ENCODE measurements at regions of chr19 and their contacts with region 1.

Region 1: DNA sequence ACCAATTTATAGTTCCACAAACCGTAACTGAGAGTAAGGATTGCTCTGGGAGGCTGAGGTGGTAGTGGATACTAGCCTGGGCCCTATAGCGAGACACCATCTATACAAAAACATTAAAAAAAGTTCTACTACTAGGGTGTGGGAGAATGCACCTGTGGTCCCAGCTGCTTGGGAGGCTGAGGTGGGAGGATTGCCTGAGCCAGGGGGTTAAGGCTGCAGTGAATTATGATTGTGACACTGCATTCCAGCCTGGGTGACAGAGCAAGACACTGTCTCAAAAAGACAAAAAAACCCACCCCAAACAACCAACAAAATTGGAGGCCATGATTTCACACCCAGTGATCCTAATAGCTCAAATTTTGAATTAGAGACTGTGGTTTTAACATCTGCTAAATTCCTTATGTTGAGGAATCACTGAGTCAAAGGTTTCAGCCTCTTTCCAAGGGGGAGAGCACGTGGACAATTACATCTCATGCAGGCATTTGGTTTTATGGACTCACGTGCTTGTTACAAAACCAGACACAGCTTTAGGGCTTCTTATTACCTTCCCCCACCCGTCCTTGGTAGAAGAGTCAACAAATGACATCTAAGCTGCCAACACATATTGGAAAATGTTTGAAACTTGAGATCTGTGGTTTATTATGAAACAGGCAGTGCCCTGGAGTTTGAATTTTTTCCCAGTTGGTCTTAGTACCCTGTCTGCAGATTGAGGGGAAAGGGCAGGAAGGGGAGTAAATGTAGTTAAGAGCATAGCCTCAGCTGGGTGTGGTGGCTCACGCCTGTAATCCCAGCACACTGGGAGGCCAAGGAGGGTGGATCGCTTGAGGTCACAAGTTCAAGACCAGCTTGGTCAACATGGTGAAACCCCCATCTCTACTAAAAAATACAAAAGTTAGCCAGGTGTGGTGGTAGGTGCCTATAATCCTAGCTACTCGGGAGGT is 18.5 kb downstream of the CYP2A6 start:
- H3K4me3 ChIP-seq: no peak overlapping the region
- H3K27ac ChIP-seq: peak overlapping the region; percentile 84
- H3K4me1 ChIP-seq: peaks cover 26% of the 10 kb centered on the region
- CTCF ChIP-seq: no peak

Region 2: DNA sequence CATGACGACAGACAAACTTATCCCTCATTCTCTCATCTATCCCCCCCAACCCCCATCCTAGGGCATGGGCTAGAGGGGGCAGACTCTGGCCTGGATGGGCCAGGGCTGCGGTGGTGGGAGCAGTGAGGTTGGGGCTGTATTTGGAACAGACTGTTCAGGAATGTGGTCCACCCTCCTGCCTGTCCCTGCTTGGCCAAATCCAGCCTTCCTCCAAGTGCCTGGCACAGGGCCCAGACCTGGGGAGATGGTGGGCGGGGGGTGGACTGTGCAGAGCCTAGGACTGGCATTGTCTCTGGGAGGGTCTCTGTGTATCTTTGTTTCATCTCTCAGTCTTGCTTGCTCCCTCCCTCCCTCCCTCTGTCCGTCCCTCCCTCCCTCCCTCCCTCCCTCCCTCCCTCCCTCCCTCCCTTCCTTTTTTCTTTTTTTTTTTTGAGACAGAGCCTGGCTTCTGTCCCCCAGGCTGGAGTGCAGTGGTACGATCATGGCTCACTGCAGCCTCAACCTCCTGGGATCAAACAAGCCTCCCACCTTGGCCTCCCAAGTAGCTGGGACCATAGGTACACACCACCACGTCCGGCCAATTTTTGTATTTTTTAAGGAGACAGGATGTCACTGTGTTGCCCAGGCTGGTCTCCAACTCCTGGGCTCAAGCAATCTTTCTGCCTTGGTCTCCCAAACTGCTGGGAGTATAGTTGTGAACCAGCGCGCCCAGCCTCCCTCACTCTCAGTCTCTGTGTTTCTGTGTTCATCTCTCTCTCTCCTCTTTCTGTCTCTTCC is 18.4 kb before region 1 on chr19:
- CTCF ChIA-PET with region 1: interaction called, 25 read pairs
- POLR2A ChIA-PET with region 1: interaction called, 4 read pairs
- H3K4me3 ChIP-seq: no peak overlapping the region
- H3K27ac ChIP-seq: no peak overlapping the region
- H3K4me1 ChIP-seq: peaks cover 10% of the 10 kb centered on the region
- CTCF ChIP-seq: no peak

Region 3: DNA sequence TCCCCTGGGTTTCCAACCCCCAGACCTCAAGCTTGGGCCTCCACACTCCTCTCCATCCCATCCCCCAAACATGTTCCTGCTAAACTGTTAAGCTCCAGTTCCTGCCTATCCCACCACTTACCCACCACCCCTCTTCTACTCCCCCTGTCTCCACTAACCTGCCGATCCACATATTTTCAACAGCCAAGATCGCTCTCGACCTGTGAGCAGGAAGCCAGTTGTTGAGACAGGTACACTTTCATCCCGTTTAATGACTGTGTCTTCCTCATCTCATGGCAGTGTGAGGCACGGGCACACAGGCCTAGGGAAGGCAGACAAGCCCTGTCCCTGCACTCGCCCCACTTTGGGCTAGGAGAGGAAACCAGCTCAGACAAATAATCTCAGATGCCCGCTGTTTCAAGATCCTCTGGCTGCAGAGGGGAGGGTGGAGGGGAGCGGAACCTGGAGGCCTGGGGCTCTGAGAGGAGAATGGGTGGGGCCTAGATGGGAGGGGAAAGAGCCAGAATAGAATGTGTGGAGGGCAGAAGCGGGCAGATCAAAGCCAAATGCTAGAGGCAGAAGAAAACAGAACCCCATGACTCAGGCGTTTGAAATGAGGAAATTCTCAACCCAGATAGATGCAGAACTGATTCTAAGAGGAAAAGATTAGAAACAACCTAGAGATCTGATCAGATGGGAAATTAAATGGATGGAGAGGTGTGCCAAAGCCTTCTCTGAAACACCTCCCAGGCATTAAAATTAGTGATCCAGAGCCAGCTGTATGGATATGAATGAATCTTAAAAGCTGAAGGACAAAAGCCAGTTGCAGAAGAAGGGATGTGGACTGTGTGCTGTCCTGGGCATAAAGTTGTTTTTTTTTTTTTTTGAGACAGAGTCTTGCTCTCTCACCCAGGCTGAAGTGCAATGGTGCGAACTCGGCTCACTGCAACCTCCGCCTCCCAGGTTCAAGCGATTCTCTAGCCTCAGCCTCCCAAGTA is 344.3 kb after region 1 on chr19:
- CTCF ChIA-PET with region 1: no interaction called
- POLR2A ChIA-PET with region 1: no interaction called
- H3K4me3 ChIP-seq: no peak overlapping the region
- H3K27ac ChIP-seq: no peak overlapping the region
- H3K4me1 ChIP-seq: peaks cover 5% of the 10 kb centered on the region
- CTCF ChIP-seq: no peak